Sigmoid colon (tissue), 7 donors: ENCODE measurements at regions of chr5 and their contacts with region 1.

Region 1: DNA sequence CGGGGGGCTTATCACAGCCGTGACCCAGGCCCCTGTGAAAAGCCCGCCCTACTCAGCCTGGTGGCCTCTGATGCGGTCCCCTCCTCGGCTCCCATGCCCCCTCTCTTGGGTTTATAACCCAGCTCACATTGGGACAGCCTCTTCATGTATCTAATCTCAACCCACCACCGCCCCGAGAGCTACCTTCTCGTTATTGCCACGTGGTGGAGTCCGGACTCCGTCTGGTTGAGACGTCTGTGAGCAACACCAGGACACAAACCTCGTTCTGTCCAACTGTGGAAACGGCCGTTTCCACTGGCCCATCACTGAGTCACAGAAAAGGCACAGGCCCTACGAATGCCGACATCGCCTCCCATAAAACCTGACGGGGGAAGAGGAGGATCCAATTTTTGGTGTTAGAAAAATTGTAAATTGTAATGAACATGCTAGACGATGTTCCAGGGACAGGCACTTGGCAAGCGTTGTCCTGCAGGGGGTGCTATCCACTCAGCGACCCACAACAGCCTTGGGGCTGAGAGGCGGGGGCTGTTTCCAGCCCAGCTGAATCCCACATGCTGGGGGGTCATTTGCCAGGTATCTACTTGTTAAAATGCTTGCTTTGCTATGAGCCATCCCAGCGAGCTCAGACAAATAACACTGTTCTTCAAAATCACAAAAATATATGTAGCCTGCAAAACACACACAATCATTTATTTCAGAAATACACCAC is 37.3 kb upstream of the N4BP3 start:
- DNase-seq: peak; percentile 74
- H3K4me3 ChIP-seq: no peak overlapping the region
- H3K27ac ChIP-seq: no peak overlapping the region
- H3K4me1 ChIP-seq: no peaks in the 10 kb centered on the region
- H3K27me3 ChIP-seq: peaks cover 0 to 25% (median 6%) of the 10 kb centered on the region in 3 donors
- CTCF ChIP-seq: peak; percentile 56 to 83 (median 70)
- EP300 ChIP-seq: no peak
- POLR2A ChIP-seq: no peak

Region 2: GRCh38 chr5:177576169-177576568 is 499.8 kb before region 1 on chr5:
- intact Hi-C with region 1: no loop called
- DNase-seq: no peak
- H3K4me3 ChIP-seq: no peak overlapping the region
- H3K27ac ChIP-seq: no peak overlapping the region
- H3K4me1 ChIP-seq: no peaks in the 10 kb centered on the region
- H3K27me3 ChIP-seq: no peaks in the 10 kb centered on the region
- CTCF ChIP-seq: no peak
- EP300 ChIP-seq: no peak
- POLR2A ChIP-seq: no peak

Region 3: GRCh38 chr5:178146020-178146820 is 70.2 kb after region 1 on chr5:
- intact Hi-C with region 1: no loop called
- DNase-seq: no peak
- H3K4me3 ChIP-seq: no peak overlapping the region
- H3K27ac ChIP-seq: no peak overlapping the region
- H3K4me1 ChIP-seq: peaks cover 0 to 21% (median 2%) of the 10 kb centered on the region in 4 donors
- H3K27me3 ChIP-seq: no peaks in the 10 kb centered on the region
- CTCF ChIP-seq: peak in 3 of 4 experiments; percentile 27 to 64 (median 42)
- EP300 ChIP-seq: no peak
- POLR2A ChIP-seq: no peak

Region 4: GRCh38 chr5:178163772-178164735 is 88.1 kb after region 1 on chr5:
- intact Hi-C with region 1: loop called (anchors 1 kb)
- DNase-seq: peak; percentile 89
- H3K4me3 ChIP-seq: peak overlapping the region in 2 of 4 donors; percentile 12 to 16
- H3K27ac ChIP-seq: no peak overlapping the region
- H3K4me1 ChIP-seq: peaks cover 0 to 9% (median 9%) of the 10 kb centered on the region in 4 donors
- H3K27me3 ChIP-seq: peaks cover 0 to 33% (median 14%) of the 10 kb centered on the region in 3 donors
- CTCF ChIP-seq: peak; percentile 94 to 100 (median 97)
- EP300 ChIP-seq: no peak
- POLR2A ChIP-seq: no peak

Region 5: DNA sequence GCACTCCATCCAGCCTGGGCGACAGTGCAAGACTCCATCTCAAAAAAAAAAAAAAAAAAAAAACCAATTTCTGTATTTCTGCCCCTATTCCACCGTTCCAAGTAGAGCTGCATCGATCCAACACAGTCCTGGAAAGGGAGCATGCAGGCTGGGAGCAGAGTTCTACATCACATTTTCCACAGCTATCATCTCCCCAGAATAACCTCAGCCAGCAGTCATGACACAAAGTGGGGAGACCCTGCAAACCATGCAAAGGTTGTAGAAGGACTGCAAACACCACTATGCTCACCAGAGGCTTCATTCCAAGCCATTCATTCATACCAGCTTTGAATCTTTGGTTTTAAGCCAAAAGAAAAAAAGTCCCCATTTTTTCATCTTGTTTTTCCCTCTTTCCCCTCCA is 675.3 kb after region 1 on chr5:
- intact Hi-C with region 1: no loop called
- DNase-seq: no peak
- H3K4me3 ChIP-seq: no peak overlapping the region
- H3K27ac ChIP-seq: no peak overlapping the region
- H3K4me1 ChIP-seq: no peaks in the 10 kb centered on the region
- H3K27me3 ChIP-seq: no peaks in the 10 kb centered on the region
- CTCF ChIP-seq: no peak
- EP300 ChIP-seq: no peak
- POLR2A ChIP-seq: no peak